SK-N-SH (cell line): ENCODE measurements at regions of chr2 and their contacts with region 1.

Region 1: DNA sequence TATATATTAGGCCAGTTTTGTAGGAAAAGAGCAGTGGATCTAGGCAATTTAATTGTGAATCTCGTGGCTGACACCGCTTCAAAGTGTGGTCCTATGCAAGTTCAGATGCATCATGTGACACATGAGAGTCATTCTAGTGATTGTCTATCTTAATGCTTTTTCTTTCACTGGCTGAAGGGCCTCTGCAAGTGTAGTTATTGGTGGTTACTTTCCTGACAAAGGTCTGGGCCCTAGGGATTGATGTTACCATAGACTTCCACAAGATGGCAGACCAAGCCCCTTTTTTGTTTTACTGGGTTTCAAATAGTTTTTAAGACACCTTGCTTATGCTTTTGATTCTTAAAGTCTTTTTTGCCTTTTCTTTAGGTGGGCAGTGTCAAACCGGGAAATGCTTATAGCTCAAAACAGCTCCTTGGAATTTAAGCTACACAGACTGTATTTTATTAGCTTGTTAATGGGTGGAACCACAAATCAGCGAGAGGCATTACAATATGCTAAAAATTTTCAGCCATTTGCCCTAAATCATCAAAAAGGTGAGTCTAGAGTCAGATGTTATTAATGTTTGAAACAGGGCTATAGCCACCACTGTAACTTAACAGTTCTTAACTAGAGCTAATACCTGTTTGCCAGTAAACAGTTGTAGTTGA is 25.9 kb downstream of the CD8A start:
- DNase-seq: peak; percentile 58
- H3K4me3 ChIP-seq: no peak overlapping the region
- H3K27ac ChIP-seq: no peak overlapping the region
- H3K4me1 ChIP-seq: peaks cover 0 to 3% of the 10 kb centered on the region in 2 experiments; a peak in 1 of 4 replicates
- H3K27me3 ChIP-seq: no peaks in the 10 kb centered on the region
- CTCF ChIP-seq: peak; percentile 74
- EP300 ChIP-seq: no peak
- RAD21 ChIP-seq: peak; percentile 77

Region 2: GRCh38 chr2:86512034-86512433 is 252.8 kb before region 1 on chr2:
- CTCF ChIA-PET with region 1: no interaction called
- POLR2A ChIA-PET with region 1: no interaction called
- DNase-seq: no peak
- H3K4me3 ChIP-seq: no peak overlapping the region
- H3K27ac ChIP-seq: no peak overlapping the region
- H3K4me1 ChIP-seq: no peaks in the 10 kb centered on the region; a peak in 1 of 4 replicates
- H3K27me3 ChIP-seq: no peaks in the 10 kb centered on the region
- CTCF ChIP-seq: no peak
- EP300 ChIP-seq: no peak
- RAD21 ChIP-seq: no peak

Region 3: DNA sequence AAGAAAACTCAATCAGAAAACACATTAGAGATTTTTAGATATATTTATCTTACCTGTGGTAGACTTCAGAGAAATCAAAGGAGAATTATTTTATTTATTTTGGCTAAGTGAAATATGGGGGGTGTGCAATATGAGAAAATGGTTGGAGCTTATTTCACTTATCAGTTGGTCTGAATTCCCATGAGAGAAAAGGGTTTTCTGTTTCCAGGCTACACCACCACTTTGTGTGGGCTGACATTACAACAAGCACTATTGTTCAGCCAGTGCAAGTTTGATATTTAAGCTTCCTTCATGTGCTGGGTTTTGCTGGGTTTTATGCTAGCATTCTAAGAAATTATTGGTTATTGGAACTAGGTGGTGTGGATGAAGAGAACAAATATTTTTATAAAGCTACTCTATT is 11.2 kb before region 1 on chr2:
- CTCF ChIA-PET with region 1: interaction called, 23 read pairs
- POLR2A ChIA-PET with region 1: no interaction called
- DNase-seq: no peak
- H3K4me3 ChIP-seq: no peak overlapping the region
- H3K27ac ChIP-seq: no peak overlapping the region; a peak in 1 of 4 replicates
- H3K4me1 ChIP-seq: no peaks in the 10 kb centered on the region
- H3K27me3 ChIP-seq: no peaks in the 10 kb centered on the region
- CTCF ChIP-seq: no peak
- EP300 ChIP-seq: no peak
- RAD21 ChIP-seq: no peak

Region 4: DNA sequence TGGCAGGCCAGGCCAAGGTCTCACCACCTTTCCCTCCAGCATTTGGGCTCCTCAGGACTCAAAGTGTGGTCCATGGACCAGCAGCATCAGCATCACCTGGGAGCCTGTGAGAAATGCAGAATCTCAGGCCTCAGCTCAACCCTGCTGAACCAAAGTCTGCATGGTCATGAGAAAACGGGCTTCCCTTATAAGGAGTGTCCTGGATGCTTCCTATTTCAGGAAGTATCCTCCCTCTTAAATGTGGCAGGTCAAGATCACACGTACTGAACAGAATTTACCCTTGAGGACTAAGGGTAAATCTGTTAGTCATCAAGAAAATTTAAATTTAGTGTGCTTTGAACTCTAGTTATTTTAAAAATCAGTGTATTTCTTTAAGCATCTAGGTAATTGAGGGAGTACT is 14.2 kb after region 1 on chr2:
- CTCF ChIA-PET with region 1: interaction called, 12 read pairs
- POLR2A ChIA-PET with region 1: no interaction called
- DNase-seq: no peak
- H3K4me3 ChIP-seq: no peak overlapping the region
- H3K27ac ChIP-seq: no peak overlapping the region
- H3K4me1 ChIP-seq: no peaks in the 10 kb centered on the region
- H3K27me3 ChIP-seq: no peaks in the 10 kb centered on the region
- CTCF ChIP-seq: no peak
- EP300 ChIP-seq: no peak
- RAD21 ChIP-seq: no peak

Region 5: DNA sequence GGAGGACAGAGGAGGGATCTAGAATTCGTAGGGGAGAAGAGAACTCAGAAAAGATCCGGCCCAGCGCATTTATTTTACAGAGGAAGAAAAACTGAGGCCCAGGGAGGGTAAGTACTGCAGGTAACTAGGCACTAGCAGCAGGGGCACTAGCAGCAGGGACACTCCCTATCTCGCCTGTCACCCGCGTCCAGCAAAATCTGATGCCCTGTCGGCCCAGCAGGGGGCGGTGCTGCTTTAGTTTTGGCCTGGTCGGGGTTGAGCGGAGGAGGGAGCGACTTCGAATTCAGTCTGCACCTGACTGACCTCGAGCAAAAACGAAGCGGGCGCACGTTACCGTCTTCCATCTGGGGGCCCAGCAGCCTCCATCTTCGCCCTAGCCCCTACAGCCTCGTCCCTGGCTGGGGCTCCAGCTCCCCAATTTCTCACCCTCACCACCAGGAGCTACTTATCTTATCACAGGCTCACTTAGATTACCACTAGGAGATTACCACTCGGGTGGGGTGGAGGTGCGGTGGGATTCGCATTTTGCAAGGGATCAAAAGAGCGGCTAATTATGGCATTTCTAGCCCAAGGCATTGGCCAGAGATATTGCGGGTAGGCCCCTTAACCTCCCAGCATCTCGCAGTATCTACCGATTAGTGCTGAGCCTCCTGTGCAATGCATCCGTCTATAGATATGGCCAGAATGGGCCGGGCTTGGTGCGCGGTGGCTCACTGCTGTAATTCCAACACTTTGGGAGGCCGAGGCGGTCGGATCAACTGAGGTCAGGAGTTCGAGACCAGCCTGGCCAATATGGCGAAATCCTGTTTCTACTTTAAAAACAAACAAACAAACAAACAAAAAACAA is 43.8 kb after region 1 on chr2:
- CTCF ChIA-PET with region 1: interaction called, 25 read pairs
- POLR2A ChIA-PET with region 1: no interaction called
- DNase-seq: peak; percentile 96
- H3K4me3 ChIP-seq: peak overlapping the region; percentile 53 to 70
- H3K27ac ChIP-seq: peak overlapping the region in 1 of 2 experiments; percentile 73; a peak in 2 of 4 replicates
- H3K4me1 ChIP-seq: peaks cover 0 to 11% of the 10 kb centered on the region in 2 experiments; a peak in 2 of 4 replicates
- H3K27me3 ChIP-seq: no peaks in the 10 kb centered on the region; the same call in 1 of the 2 replicates
- CTCF ChIP-seq: peak; percentile 89
- EP300 ChIP-seq: no peak
- RAD21 ChIP-seq: peak; percentile 93